ENCODE measurements at regions of chr19 and their contacts with region 1.

Region 1: DNA sequence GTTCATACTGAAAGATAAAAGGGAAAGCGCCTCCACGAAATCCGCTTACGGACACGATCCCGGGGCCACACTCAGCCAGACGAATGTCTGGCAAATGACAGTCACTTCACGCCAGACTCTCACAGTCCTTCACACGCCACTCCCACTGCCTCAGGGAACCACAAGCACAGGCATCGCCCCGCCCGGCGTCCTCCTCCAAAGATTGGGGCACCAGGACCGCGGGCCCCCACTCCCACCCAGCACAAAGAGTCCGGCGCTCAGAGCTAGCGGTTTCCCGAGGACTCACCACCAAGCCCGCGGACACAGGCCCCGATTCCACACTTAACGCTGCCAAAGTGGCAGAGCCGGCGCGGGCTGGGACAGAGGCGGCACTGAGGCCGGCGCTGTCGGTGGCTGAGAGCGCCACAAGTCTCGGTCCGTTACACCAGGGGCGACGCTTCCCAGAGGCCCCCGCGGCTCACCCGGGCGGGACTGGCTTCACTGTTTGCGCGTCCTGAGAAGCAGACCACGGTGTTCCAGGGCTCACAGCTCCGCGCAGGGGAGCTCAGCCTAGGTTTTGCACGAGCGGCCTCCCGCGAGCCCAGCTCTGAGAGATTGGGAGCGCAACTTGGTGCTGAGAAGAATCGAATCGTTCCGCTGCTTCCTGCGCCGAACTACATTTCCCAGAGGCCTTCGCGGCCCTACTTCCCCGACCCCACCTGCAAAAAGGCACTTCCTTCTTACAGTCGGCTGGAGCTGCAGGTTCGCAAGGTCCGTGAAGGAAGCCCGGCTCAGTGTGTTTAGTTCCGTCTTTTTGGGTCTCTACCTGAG is at the start of gene ZNF569:
- DNase-seq: peak; percentile 89
- ATAC-seq: peak; percentile 85
- H3K4me3 ChIP-seq: peak within 1 kb of the TSS; percentile 76 to 97 (median 89)
- H3K27ac ChIP-seq: peak within 1 kb of the TSS; percentile 89
- H3K4me1 ChIP-seq: peaks cover 30% of the 10 kb centered on the region
- H3K27me3 ChIP-seq: no peaks in the 10 kb centered on the region; a peak in 1 of 5 replicates
- CTCF ChIP-seq: peak; percentile 0; the same call in 1 of the 2 replicates
- EP300 ChIP-seq: 0 out of 4 replicates have a peak, but pooled peaks of 1 of the 2 experiments have one; percentile 10
- POLR2A ChIP-seq: peak; percentile 58 to 74; a peak in 1 of 4 replicates
- RAD21 ChIP-seq: no peak; the same call in 1 of the 2 replicates
- total RNA-seq, gene ZNF569: 5.7 and 7.0 TPM in 2 replicates

Region 2: GRCh38 chr19:36915992-36916830 is 550.8 kb before region 1 on chr19 and contains the starts of genes ZNF568 and ZNF829:
- CTCF ChIA-PET with region 1: no interaction called
- POLR2A ChIA-PET with region 1: no interaction called
- in situ Hi-C with region 1: no loop called
- intact Hi-C with region 1: loop called (anchors 5 kb)
- DNase-seq: peak; percentile 69
- ATAC-seq: peak; percentile 98
- H3K4me3 ChIP-seq: peak within 1 kb of the TSS; percentile 63 to 74 (median 73); a peak in 5 of 6 replicates
- H3K27ac ChIP-seq: peak within 1 kb of the TSS; percentile 66
- H3K4me1 ChIP-seq: no peaks in the 10 kb centered on the region
- H3K27me3 ChIP-seq: no peaks in the 10 kb centered on the region
- CTCF ChIP-seq: peak; percentile 76
- EP300 ChIP-seq: no peak
- POLR2A ChIP-seq: no peak
- RAD21 ChIP-seq: no peak
- total RNA-seq, gene ZNF568: 1.00 and 1.9 TPM in 2 replicates
- total RNA-seq, gene ZNF829: 0.86 and 1.6 TPM in 2 replicates

Region 3: DNA sequence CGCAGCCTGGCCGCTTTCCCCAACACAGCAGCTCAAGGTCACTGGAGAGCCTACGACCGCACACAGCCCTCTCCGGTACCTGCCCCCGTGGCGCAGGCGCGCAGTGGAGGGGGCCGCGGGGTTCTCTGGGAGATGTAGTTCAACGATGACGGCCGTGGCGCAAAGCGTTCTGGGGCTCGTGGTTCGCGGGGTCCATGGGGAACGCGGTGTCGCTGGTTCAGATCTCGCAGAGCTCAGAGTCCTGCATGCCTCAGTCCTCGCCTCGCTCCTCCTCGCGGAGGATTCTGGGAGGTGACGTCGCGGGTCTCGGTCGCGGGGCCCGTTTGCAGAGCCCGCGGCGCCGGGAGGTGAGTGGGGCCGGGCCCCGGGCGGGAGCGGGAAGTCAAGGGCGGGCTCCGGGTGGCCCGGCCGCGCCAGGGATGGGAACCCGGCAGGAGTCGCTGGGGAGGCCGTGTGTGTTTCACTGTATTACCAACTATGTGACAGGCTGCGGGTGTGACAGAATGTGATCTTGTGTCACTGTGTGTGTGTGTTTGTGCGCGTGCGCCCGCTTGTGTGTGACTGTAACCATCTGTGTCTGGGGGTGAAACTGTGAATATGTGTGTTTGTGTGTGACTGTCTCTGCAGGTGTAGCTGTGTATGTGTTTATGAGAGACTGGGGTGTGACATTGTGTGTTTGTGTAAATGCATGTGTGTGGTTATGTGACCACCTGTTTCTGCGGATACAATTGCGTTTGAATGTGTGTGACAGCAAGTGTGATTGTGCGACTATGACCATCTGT is 95.9 kb before region 1 on chr19 and contains the start of gene ZNF527:
- CTCF ChIA-PET with region 1: no interaction called
- POLR2A ChIA-PET with region 1: interaction called, 12 read pairs
- in situ Hi-C with region 1: no loop called
- intact Hi-C with region 1: loop called (anchors 5 kb)
- DNase-seq: peak; percentile 96
- ATAC-seq: peak; percentile 98
- H3K4me3 ChIP-seq: peak within 1 kb of the TSS; percentile 58 to 86 (median 80)
- H3K27ac ChIP-seq: peak within 1 kb of the TSS; percentile 67
- H3K4me1 ChIP-seq: peaks cover 8% of the 10 kb centered on the region
- H3K27me3 ChIP-seq: no peaks in the 10 kb centered on the region; a peak in 1 of 5 replicates
- CTCF ChIP-seq: peak; percentile 24; the same call in 1 of the 2 replicates
- EP300 ChIP-seq: peak in 1 of 2 experiments; percentile 26; a peak in 1 of 4 replicates
- POLR2A ChIP-seq: peak in 1 of 2 experiments; percentile 85
- RAD21 ChIP-seq: peak; percentile 47; the same call in 1 of the 2 replicates
- total RNA-seq, gene ZNF527: 3.5 and 4.2 TPM in 2 replicates

Region 4: GRCh38 chr19:37594304-37594981 is 127.4 kb after region 1 on chr19 and contains the starts of genes ZNF540 and ZNF571:
- CTCF ChIA-PET with region 1: no interaction called
- POLR2A ChIA-PET with region 1: interaction called, 7 read pairs
- in situ Hi-C with region 1: no loop called
- intact Hi-C with region 1: loop called (anchors 2 kb)
- DNase-seq: peak; percentile 90
- ATAC-seq: peak; percentile 99
- H3K4me3 ChIP-seq: peak within 1 kb of the TSS; percentile 70 to 96 (median 88)
- H3K27ac ChIP-seq: peak within 1 kb of the TSS; percentile 73
- H3K4me1 ChIP-seq: peaks cover 14% of the 10 kb centered on the region; the same call in 1 of the 2 replicates
- H3K27me3 ChIP-seq: no peaks in the 10 kb centered on the region; a peak in 1 of 5 replicates
- CTCF ChIP-seq: no peak
- EP300 ChIP-seq: no peak
- POLR2A ChIP-seq: peak; percentile 48 to 57
- RAD21 ChIP-seq: no peak
- total RNA-seq, gene ZNF540: 0.21 and 0.40 TPM in 2 replicates
- total RNA-seq, gene ZNF571: 1.9 and 4.0 TPM in 2 replicates

Region 5: GRCh38 chr19:37655689-37656371 is 188.8 kb after region 1 on chr19:
- CTCF ChIA-PET with region 1: no interaction called
- POLR2A ChIA-PET with region 1: no interaction called
- in situ Hi-C with region 1: no loop called
- intact Hi-C with region 1: loop called (anchors 5 kb)
- DNase-seq: peak; percentile 80
- ATAC-seq: peak; percentile 88
- H3K4me3 ChIP-seq: peak overlapping the region; percentile 87 to 97 (median 93)
- H3K27ac ChIP-seq: peak overlapping the region; percentile 94
- H3K4me1 ChIP-seq: peaks cover 15% of the 10 kb centered on the region
- H3K27me3 ChIP-seq: no peaks in the 10 kb centered on the region; a peak in 1 of 5 replicates
- CTCF ChIP-seq: peak; percentile 39
- EP300 ChIP-seq: no peak
- POLR2A ChIP-seq: peak; percentile 63 to 74
- RAD21 ChIP-seq: no peak

Region 6: DNA sequence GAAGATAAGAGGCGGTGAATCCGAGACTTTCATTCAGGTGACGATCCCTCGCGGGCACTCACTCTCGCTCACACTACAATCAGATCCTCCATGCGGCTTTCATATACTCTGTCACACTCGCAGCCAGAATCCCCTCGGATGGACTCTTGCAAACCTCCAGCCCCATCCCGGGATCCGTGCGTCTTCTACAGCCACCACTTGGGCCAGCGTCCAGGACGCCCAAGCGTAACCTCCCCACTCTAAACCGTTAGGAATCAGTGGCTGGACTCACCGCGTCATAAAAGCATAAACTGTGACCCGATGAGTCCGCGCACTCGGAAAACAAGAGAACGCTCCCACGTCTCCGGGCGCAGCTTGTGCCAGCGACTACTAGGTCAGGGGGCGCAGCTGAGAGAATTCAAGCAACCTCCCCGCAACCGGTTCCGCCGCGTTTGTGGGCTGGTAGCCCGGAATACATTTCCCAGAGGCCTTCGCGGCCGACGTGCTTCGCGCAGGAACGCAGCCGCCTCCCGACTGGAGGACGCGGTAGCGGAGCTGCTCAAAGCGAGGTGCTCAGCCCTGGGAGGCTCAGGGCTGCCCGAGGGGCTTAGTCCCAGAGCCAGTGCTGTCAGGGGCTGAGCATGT is 225.0 kb after region 1 on chr19:
- CTCF ChIA-PET with region 1: no interaction called
- POLR2A ChIA-PET with region 1: no interaction called
- in situ Hi-C with region 1: no loop called
- intact Hi-C with region 1: loop called (anchors 10 kb)
- DNase-seq: peak; percentile 87
- ATAC-seq: peak; percentile 97
- H3K4me3 ChIP-seq: peak overlapping the region; percentile 71 to 79 (median 78)
- H3K27ac ChIP-seq: peak overlapping the region; percentile 84
- H3K4me1 ChIP-seq: peaks cover 10% of the 10 kb centered on the region; the same call in 1 of the 2 replicates
- H3K27me3 ChIP-seq: no peaks in the 10 kb centered on the region; a peak in 1 of 5 replicates
- CTCF ChIP-seq: peak; percentile 69
- EP300 ChIP-seq: no peak
- POLR2A ChIP-seq: peak; percentile 61 to 90
- RAD21 ChIP-seq: peak; percentile 45; the same call in 1 of the 2 replicates

Measured in HepG2 (cell line).